Activated CD4-positive, alpha-beta T cell treated with anti-CD3 and anti-CD28 coated beads for 36 hours (primary cell): ENCODE measurements at regions of chr5 and their contacts with region 1.

Region 1: DNA sequence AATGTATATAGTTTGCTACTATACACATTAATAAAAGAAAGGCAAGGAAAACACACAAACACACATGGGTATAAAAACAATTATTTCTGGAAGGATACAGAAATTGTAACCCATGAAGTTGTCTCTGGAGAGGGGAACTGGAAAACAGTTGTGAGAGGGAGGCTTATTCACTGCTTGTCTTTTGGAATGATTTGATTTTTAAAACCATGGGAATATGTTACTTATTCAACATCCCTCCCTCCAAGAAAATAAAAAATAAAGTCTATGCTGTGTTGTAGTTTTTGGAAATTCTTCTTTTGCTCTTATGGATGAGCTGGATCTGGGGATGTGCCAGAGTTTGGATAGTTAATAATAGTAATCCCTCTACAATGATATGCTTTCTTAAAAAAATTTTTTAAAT is 6.0 kb upstream of the C1QTNF2 start:
- DNase-seq: no peak
- ATAC-seq: no peak
- H3K4me3 Mint-ChIP-seq: no peak overlapping the region
- H3K27ac Mint-ChIP-seq: no peak overlapping the region
- H3K4me1 Mint-ChIP-seq: no peaks in the 10 kb centered on the region
- H3K27me3 Mint-ChIP-seq: peaks cover 35% of the 10 kb centered on the region

Region 2: GRCh38 chr5:160333721-160334120 is 42.7 kb before region 1 on chr5:
- CTCF ChIA-PET with region 1: no interaction called
- POLR2A ChIA-PET with region 1: interaction called, 10 read pairs
- intact Hi-C with region 1: no loop called
- DNase-seq: no peak
- ATAC-seq: no peak
- H3K4me3 Mint-ChIP-seq: no peak overlapping the region
- H3K27ac Mint-ChIP-seq: no peak overlapping the region
- H3K4me1 Mint-ChIP-seq: peaks cover 7% of the 10 kb centered on the region
- H3K27me3 Mint-ChIP-seq: peaks cover 3% of the 10 kb centered on the region

Region 3: DNA sequence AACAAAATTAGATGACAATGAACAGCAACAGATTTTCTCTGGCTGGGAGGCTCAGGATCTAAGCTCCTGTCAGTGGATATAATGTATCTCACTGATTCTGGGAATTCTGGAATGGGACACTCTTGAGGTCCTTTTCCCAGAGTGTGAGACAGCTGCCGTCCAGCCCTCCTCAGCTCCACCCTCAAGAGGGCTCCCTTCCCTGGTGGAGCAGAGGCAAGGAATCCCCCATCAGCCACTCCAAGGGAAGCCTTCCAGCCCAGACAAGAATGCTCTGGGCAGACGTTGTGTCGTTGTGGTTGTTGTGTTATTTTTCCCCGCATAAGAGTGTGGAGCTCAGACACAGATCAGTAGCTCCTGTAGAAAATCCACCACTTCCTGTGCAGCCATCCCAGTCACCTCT is 523.3 kb after region 1 on chr5:
- CTCF ChIA-PET with region 1: no interaction called
- POLR2A ChIA-PET with region 1: no interaction called
- intact Hi-C with region 1: no loop called
- DNase-seq: no peak
- ATAC-seq: no peak
- H3K4me3 Mint-ChIP-seq: no peak overlapping the region
- H3K27ac Mint-ChIP-seq: no peak overlapping the region
- H3K4me1 Mint-ChIP-seq: no peaks in the 10 kb centered on the region
- H3K27me3 Mint-ChIP-seq: no peaks in the 10 kb centered on the region